ENCODE measurements at regions of chr2 and their contacts with region 1.

Region 1: GRCh38 chr2:74919827-74920226 is 38.6 kb upstream of the POLE4 start:
- DNase-seq: peak; percentile 77 to 82 (median 80)
- ATAC-seq: peak; percentile 86
- H3K4me3 ChIP-seq: peak overlapping the region; percentile 18; the same call in 1 of the 2 replicates
- H3K27ac ChIP-seq: no peak overlapping the region
- H3K4me1 ChIP-seq: peaks cover 4 to 6% of the 10 kb centered on the region in 2 experiments; a peak in 2 of 5 replicates
- H3K27me3 ChIP-seq: peaks cover 3 to 40% of the 10 kb centered on the region in 2 experiments; a peak in 4 of 5 replicates
- CTCF ChIP-seq: peak; percentile 83 to 93 (median 89)
- EP300 ChIP-seq: no peak
- POLR2A ChIP-seq: no peak
- RAD21 ChIP-seq: peak; percentile 85 to 94

Region 2: DNA sequence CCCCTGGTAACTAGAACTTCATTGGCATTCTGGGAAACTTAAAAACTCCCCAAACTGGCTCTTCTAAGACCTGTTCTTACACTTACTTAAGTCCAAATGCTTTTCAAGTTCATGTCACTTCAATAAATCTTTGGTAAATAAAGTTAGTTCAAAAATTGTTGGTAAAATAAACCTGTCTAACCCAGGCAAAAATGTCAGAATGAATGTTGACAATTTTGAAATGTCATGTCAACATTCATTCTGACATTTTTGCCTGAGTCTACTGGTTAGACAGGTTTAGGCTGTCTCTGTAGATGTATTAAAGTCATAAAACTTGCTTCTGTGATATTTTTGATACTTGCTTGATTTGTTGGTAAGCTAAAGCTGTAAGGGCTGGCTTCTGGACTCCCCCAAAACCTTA is 22.0 kb before region 1 on chr2:
- CTCF ChIA-PET with region 1: no interaction called
- POLR2A ChIA-PET with region 1: no interaction called
- in situ Hi-C with region 1: no loop called
- intact Hi-C with region 1: no loop called
- DNase-seq: no peak
- ATAC-seq: no peak
- H3K4me3 ChIP-seq: no peak overlapping the region
- H3K27ac ChIP-seq: no peak overlapping the region
- H3K4me1 ChIP-seq: no peaks in the 10 kb centered on the region
- H3K27me3 ChIP-seq: no peaks in the 10 kb centered on the region
- CTCF ChIP-seq: no peak
- EP300 ChIP-seq: no peak
- POLR2A ChIP-seq: no peak
- RAD21 ChIP-seq: no peak

Region 3: GRCh38 chr2:74966887-74967286 is 47.1 kb after region 1 on chr2:
- CTCF ChIA-PET with region 1: no interaction called
- POLR2A ChIA-PET with region 1: no interaction called
- in situ Hi-C with region 1: no loop called
- intact Hi-C with region 1: no loop called
- DNase-seq: no peak
- ATAC-seq: no peak
- H3K4me3 ChIP-seq: no peak overlapping the region
- H3K27ac ChIP-seq: no peak overlapping the region
- H3K4me1 ChIP-seq: no peaks in the 10 kb centered on the region
- H3K27me3 ChIP-seq: no peaks in the 10 kb centered on the region
- CTCF ChIP-seq: no peak
- EP300 ChIP-seq: no peak
- POLR2A ChIP-seq: no peak
- RAD21 ChIP-seq: no peak

Region 4: GRCh38 chr2:74982577-74982976 is 62.8 kb after region 1 on chr2:
- CTCF ChIA-PET with region 1: interaction called, 4 read pairs
- POLR2A ChIA-PET with region 1: interaction called, 5 read pairs
- in situ Hi-C with region 1: no loop called
- intact Hi-C with region 1: loop called (anchors 2 kb)
- DNase-seq: peak in 1 of 4 experiments; percentile 4
- ATAC-seq: peak; percentile 49; the same call in 1 of the 3 replicates
- H3K4me3 ChIP-seq: no peak overlapping the region
- H3K27ac ChIP-seq: no peak overlapping the region
- H3K4me1 ChIP-seq: no peaks in the 10 kb centered on the region
- H3K27me3 ChIP-seq: peaks cover 0 to 4% of the 10 kb centered on the region in 2 experiments; a peak in 1 of 5 replicates
- CTCF ChIP-seq: peak; percentile 33 to 51 (median 34); a peak in 4 of 6 replicates
- EP300 ChIP-seq: no peak
- POLR2A ChIP-seq: no peak
- RAD21 ChIP-seq: peak; percentile 23 to 40; a peak in 3 of 4 replicates

Region 5: DNA sequence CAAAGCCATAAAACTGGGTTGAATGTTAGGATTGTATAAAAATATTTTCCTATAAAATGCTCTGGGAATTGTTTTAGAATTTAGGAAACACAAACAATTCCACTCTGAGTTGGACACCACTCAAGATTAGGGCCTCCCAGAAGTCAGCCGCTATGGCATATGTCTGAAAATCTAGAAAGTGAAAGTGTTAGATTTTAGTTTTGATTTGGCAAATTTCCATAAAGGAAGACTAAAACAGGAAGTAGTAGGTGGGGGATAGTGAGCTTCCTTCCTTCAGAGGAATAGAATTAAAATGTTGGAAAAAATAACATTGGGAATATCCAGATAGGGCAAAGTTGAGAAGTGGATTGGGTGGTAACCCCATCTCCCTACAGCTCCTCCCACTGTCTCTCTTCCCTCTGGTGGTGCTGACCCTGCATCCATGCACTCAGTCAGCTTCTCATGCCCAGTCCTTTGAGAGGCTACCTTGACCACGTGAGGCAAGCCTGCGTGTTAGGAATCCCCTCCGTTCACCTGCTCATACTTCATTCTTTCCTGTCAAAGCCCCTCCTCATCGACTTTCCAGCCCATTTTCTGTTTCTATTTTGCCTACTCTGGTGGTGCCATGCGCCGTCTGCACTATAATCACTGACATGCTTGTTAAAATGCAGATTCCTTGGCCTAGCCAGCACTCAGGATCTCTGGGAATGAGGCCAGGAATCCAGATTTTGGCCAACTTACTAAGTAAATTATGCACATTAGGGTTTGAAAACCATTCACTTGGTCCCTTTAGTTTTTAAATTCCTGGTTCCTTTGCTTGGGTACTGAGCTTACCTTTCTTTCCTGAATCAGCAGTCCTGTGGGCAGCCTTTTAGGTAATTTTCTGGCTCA is 122.1 kb after region 1 on chr2:
- CTCF ChIA-PET with region 1: no interaction called
- POLR2A ChIA-PET with region 1: no interaction called
- in situ Hi-C with region 1: no loop called
- intact Hi-C with region 1: no loop called
- DNase-seq: no peak
- ATAC-seq: no peak
- H3K4me3 ChIP-seq: no peak overlapping the region
- H3K27ac ChIP-seq: no peak overlapping the region
- H3K4me1 ChIP-seq: no peaks in the 10 kb centered on the region
- H3K27me3 ChIP-seq: no peaks in the 10 kb centered on the region
- CTCF ChIP-seq: no peak
- EP300 ChIP-seq: no peak
- POLR2A ChIP-seq: no peak
- RAD21 ChIP-seq: no peak

Region 6: DNA sequence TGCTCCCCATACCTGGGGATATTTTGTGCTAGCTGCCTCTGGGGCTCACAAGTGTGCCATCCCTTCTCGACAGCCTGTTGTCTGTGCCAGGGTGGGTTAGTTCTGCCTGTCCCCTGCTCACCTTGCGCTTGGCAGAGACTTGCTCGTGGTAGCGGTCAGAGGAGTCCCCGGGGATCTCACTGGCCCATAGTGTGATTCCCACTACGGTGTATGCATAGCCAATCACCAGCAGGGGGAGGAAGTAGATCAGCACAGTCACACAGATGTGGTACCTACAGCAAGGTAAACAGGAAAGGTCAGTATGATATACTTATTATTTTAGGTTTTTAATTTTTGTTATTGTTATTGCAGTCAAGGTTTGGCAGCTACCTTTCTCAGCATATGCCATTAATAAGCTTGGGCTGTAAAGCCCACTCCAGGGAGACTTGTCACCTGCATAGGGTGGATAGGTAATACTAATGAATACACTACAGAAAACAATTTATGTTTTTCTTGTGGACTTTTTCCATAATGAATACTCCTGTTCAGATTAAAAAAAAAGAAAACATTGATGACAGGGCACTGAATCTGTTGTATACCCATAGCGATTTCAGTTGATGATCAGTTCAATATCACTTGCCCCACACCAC is 133.8 kb after region 1 on chr2:
- CTCF ChIA-PET with region 1: no interaction called
- POLR2A ChIA-PET with region 1: no interaction called
- in situ Hi-C with region 1: loop called (anchors 5 kb)
- intact Hi-C with region 1: loop called (anchors 5 kb)
- DNase-seq: peak; percentile 52 to 57 (median 54)
- ATAC-seq: peak; percentile 99
- H3K4me3 ChIP-seq: no peak overlapping the region
- H3K27ac ChIP-seq: no peak overlapping the region
- H3K4me1 ChIP-seq: no peaks in the 10 kb centered on the region
- H3K27me3 ChIP-seq: peaks cover 4 to 24% of the 10 kb centered on the region in 2 experiments; a peak in 3 of 5 replicates
- CTCF ChIP-seq: peak; percentile 65 to 79 (median 70)
- EP300 ChIP-seq: no peak
- POLR2A ChIP-seq: no peak
- RAD21 ChIP-seq: peak; percentile 36 to 69; a peak in 2 of 4 replicates

Region 7: DNA sequence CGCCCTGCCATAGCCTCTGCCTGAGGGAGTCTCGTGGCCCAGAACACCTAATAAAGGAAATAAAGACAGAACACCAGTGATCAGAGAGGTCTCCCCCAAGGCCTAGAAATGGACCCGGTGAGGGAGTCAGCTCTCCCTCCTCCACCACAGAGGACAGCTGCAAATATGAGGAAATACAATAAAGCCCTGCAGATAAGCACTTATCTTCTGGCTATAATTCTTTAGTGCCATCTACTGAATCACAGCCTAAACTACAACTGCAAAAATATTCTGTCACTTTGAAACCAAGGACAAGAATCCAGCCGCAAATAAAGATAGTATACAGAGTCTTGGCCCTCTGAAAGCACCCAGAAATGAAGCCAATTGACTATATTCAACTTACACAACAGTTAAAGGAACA is 321.9 kb after region 1 on chr2:
- CTCF ChIA-PET with region 1: interaction called, 3 read pairs
- POLR2A ChIA-PET with region 1: no interaction called
- in situ Hi-C with region 1: loop called (anchors 10 kb)
- intact Hi-C with region 1: loop called (anchors 1 kb)
- DNase-seq: peak in 2 of 4 experiments; percentile 12 to 27
- ATAC-seq: peak; percentile 76
- H3K4me3 ChIP-seq: no peak overlapping the region
- H3K27ac ChIP-seq: no peak overlapping the region
- H3K4me1 ChIP-seq: no peaks in the 10 kb centered on the region; a peak in 1 of 5 replicates
- H3K27me3 ChIP-seq: peaks cover 0 to 8% of the 10 kb centered on the region in 2 experiments; a peak in 3 of 5 replicates
- CTCF ChIP-seq: peak; percentile 57 to 81 (median 64)
- EP300 ChIP-seq: no peak
- POLR2A ChIP-seq: no peak
- RAD21 ChIP-seq: peak in 1 of 2 experiments; percentile 71; a peak in 3 of 4 replicates

Region 8: DNA sequence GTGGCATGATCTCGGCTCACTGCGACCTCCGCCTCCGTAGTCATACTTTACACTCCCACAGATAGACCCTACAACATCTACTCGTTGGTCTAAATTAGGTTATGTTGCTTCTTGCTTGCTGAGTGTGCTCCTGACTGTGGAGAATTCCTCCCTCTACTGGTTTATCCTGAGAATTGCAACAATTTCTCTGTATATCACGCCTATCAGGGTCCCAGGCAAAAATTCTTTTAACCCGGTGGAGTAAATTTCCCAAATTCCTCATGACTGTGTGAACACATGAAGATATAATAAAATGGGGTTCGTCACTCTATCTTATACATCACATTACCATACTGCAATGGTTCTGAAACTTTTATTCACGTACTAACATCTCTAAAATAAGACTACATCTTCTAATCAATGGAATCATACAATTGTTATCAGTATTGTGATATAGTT is 484.2 kb after region 1 on chr2:
- CTCF ChIA-PET with region 1: no interaction called
- POLR2A ChIA-PET with region 1: no interaction called
- in situ Hi-C with region 1: loop called (anchors 10 kb)
- intact Hi-C with region 1: loop called (anchors 2 kb)
- DNase-seq: peak; percentile 18 to 49 (median 30)
- ATAC-seq: peak; percentile 90
- H3K4me3 ChIP-seq: no peak overlapping the region
- H3K27ac ChIP-seq: no peak overlapping the region
- H3K4me1 ChIP-seq: no peaks in the 10 kb centered on the region
- H3K27me3 ChIP-seq: no peaks in the 10 kb centered on the region
- CTCF ChIP-seq: peak; percentile 65 to 81 (median 68)
- EP300 ChIP-seq: no peak
- POLR2A ChIP-seq: no peak
- RAD21 ChIP-seq: peak; percentile 76 to 77

Region 9: DNA sequence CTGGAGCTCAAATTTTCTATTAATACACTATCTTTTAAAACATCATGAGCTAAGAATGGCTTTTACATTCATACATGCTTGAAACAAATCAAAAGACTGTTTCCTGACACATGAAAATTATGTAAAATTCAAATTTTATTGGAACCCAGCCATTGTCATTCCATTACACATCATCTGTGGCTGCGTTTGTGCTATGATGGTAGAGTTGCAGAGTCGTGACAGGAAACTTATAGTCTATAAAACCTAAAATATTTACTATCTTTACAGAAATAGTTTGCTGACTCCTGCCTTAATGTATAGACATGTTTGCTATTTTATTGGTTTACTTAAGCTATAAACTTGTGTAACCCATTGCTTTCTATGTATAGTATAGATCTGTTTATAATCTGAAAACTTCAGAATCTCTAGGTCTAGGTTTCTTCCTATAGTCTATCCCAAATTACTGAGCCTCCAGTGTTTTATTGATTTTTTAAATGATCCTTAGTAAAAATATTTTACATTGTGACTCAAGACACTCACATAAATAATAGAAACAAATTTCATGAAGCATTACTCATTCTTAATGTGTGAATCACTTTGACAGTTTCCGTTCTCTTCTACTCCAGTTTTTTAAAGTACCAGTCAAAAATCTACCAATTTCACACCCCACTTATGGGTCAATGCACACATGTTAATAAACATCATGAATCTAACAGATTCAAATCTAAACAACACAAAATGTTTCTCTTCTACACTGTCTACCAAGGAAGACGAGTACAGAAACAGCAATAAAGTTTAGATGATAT is 700.3 kb after region 1 on chr2:
- CTCF ChIA-PET with region 1: no interaction called
- POLR2A ChIA-PET with region 1: no interaction called
- in situ Hi-C with region 1: loop called (anchors 10 kb)
- intact Hi-C with region 1: no loop called
- DNase-seq: no peak
- ATAC-seq: no peak
- H3K4me3 ChIP-seq: no peak overlapping the region
- H3K27ac ChIP-seq: no peak overlapping the region
- H3K4me1 ChIP-seq: no peaks in the 10 kb centered on the region
- H3K27me3 ChIP-seq: peaks cover 0 to 5% of the 10 kb centered on the region in 2 experiments; a peak in 1 of 5 replicates
- CTCF ChIP-seq: no peak
- EP300 ChIP-seq: no peak
- POLR2A ChIP-seq: no peak
- RAD21 ChIP-seq: no peak

Measured in K562 (cell line).